Panc1 (cell line): ENCODE measurements at regions of chr12 and their contacts with region 1.

Region 1: GRCh38 chr12:121697098-121697698 is 15.4 kb upstream of the TMEM120B start:
- DNase-seq: no peak
- ATAC-seq: peak; percentile 46
- H3K4me3 ChIP-seq: no peak overlapping the region
- H3K27ac ChIP-seq: no peak overlapping the region
- H3K4me1 ChIP-seq: no peaks in the 10 kb centered on the region
- H3K27me3 ChIP-seq: no peaks in the 10 kb centered on the region
- CTCF ChIP-seq: no peak

Region 2: DNA sequence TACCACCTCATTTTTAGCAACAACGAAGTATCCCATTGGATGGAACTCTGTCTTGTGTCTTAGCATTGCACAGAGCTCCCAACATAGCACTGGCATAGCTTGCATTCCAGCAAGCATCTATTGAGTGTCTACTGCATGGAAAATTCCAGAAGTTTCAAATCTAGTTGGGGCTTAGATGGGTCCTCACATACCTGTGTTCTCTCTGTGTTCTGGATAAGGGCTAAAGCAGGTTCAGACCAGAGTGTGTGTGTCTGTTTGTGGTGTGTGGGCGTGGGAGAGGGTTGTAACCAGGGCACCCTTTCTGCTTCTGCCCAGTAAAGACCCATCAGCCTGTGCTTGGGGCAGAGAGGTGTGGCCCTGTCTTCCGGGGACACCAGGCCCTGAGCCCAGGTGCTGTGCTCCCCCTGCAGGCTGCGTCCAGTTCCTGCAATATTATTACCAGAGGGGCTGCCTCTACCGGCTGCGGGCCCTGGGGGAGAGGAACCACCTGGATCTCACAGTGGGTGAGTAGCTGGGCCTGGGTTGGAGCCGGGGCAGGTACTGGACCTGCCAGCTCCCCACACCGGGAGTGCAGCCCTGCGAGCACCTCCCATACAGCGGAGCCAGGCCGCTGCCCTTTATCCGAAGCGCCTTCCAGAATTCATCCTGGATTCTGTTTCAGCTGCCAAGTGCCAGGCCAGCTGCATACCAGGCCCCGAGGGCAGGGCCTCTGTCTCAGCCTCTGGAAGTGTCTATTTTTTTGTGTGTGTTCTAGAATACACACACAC is 76.0 kb after region 1 on chr12:
- CTCF ChIA-PET with region 1: interaction called, 10 read pairs
- POLR2A ChIA-PET with region 1: interaction called, 12 read pairs
- in situ Hi-C with region 1: no loop called
- intact Hi-C with region 1: loop called (anchors 1 kb)
- DNase-seq: peak; percentile 47
- ATAC-seq: peak; percentile 79
- H3K4me3 ChIP-seq: no peak overlapping the region
- H3K27ac ChIP-seq: peak overlapping the region; percentile 5; the same call in 1 of the 2 replicates
- H3K4me1 ChIP-seq: peaks cover 25% of the 10 kb centered on the region
- H3K27me3 ChIP-seq: no peaks in the 10 kb centered on the region
- CTCF ChIP-seq: peak; percentile 96

Region 3: DNA sequence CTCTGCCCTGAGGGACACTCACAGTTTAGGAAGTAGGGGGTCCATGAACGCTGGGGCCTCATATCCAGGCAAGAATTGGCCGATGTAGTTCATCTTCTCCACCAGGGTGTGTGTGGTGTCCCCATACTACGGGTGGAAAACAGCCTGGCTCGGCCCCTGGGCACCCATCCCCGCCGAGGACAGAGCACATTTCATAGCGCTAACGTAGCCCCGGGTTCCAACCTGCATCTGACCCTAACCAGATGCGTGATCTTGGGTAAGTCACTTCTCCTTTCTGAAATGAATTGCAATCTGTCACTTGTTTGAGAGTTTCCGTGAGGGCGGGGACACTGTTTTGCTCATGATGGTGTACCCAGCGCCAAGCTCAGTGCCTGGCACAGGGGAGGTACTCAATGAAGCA is 152.5 kb after region 1 on chr12:
- CTCF ChIA-PET with region 1: interaction called, 15 read pairs
- POLR2A ChIA-PET with region 1: no interaction called
- in situ Hi-C with region 1: no loop called
- intact Hi-C with region 1: no loop called
- DNase-seq: no peak
- ATAC-seq: peak; percentile 56; the same call in 1 of the 2 replicates
- H3K4me3 ChIP-seq: no peak overlapping the region
- H3K27ac ChIP-seq: no peak overlapping the region
- H3K4me1 ChIP-seq: no peaks in the 10 kb centered on the region
- H3K27me3 ChIP-seq: no peaks in the 10 kb centered on the region
- CTCF ChIP-seq: no peak